HEK293T (cell line): ENCODE measurements at regions of chr6 and their contacts with region 1.

Region 1: DNA sequence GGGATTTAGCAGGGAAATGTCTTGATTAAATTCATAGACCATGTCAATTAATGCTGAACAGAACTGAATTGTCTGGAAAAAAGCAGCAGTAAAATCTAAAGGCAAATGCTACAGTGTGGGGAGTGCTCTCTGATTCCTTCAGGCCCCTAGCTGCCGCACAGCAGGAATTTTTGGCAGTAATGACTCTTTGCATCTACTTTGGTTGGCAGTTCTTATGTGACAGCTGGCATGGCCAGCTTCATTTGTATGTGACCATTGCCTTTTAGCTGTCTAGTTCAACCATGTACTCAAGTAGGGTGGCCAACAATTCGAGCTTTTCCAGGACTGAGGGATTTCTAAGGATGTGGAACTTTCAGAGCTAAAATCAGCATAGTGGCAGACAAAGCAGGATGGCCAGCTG is 499.1 kb upstream of the MAN1A1 start:
- DNase-seq: no peak

Region 2: GRCh38 chr6:119894811-119895210 is 46.1 kb after region 1 on chr6:
- CTCF ChIA-PET with region 1: interaction called, 10 read pairs
- POLR2A ChIA-PET with region 1: no interaction called
- DNase-seq: no peak